Ovary (tissue), 10 donors: ENCODE measurements at regions of chr19 and their contacts with region 1.

Region 1: DNA sequence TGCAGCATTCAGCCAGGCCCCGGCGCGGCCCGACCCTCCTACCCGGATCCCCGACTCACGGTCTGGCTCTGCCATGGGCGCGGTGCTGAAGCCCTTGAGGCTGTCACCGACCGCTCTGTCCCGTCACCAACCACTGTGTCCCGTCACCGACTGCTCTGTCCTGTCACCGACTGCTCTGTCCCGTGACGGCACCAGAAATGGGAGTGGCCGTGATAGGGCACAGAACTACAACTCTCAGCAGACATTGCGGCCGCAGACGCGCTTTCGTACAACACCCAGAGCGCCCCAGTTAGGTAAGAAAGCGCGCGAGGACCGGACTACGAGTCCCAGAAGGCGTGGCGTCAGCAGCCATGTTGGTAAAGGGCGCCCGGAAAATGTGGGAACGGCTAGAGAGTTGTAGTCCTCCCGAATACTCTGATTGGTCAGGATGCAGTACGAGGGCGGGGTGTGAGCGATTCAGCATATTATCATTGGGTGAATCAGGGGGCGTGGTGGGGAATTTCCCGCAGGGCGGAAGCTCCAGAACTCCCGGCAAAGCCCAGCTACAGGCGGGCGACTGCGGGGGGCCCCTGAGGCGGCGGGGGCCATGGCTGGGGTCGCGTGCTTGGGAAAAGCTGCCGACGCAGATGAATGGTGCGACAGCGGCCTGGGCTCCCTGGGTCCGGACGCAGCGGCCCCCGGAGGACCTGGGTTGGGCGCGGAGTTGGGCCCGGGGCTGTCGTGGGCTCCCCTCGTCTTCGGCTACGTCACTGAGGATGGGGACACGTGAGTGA is at the starts of genes NFKBIB and SIRT2:
- DNase-seq: peak; percentile 98 to 100 (median 99)
- H3K4me3 ChIP-seq: peak within 1 kb of the TSS; percentile 96
- H3K27ac ChIP-seq: peak within 1 kb of the TSS; percentile 72 to 86
- H3K4me1 ChIP-seq: peaks cover 2% of the 10 kb centered on the region
- H3K27me3 ChIP-seq: no peaks in the 10 kb centered on the region
- CTCF ChIP-seq: peak in 1 of 3 donors; percentile 7
- EP300 ChIP-seq: peak; percentile 59
- POLR2A ChIP-seq: peak; percentile 53
- total RNA-seq, gene NFKBIB: 8.5 to 19.3 (median 13.2) TPM
- total RNA-seq, gene SIRT2: 51.7 to 64.9 (median 55.7) TPM

Region 2: GRCh38 chr19:38849860-38850435 is 49.7 kb before region 1 on chr19 and contains the start of gene HNRNPL:
- intact Hi-C with region 1: loop called in 1 of 4 experiments (anchors 1 kb)
- DNase-seq: peak in 4 of 5 donors; percentile 99 to 100 (median 99)
- H3K4me3 ChIP-seq: peak within 1 kb of the TSS; percentile 99
- H3K27ac ChIP-seq: peak within 1 kb of the TSS; percentile 100
- H3K4me1 ChIP-seq: peaks cover 13% of the 10 kb centered on the region
- H3K27me3 ChIP-seq: no peaks in the 10 kb centered on the region
- CTCF ChIP-seq: peak; percentile 36 to 76 (median 67)
- EP300 ChIP-seq: peak; percentile 35
- POLR2A ChIP-seq: peak; percentile 99
- total RNA-seq, gene HNRNPL: 110 to 282 (median 230) TPM

Region 3: DNA sequence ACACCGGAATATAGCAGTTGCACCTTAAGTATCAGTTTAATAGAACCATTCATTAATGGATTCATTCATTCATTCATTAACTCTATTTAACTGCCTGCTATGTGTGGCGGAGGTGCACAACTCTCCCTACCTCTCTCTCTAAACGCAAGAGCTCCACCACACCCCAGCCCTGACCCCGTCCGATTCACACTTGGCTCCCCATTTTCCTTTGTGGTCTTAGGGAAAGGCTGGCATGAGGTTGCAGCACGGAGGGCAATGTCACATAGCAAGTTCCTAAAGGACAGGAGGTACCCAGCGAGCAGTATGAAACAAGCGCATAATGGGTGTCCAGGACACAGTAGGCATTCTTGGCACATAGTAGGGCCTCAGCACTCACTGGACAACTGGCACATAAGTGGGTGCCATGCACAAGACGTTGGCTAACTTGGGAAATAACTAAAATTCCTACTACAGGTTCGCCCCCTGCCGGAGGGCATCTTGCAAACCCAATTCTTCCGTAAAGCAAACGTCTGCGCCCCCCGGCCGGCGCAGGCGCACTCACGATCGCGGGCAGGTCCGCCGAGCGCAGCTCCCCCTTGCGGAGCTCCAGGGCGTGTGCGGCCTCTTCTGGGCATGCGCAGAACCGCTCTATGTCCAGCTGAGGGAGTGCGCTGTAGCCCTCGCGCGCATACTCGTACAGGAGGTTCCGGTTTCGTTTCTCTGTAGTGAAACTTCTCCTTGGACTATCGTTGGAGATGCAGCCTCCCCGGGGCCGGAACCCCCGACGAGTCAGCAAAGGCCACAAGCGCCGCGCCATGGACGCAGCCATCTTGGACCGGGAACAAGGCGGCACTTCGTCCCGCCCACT is 30.5 kb after region 1 on chr19 and contains the start of gene SARS2:
- intact Hi-C with region 1: loop called in 1 of 4 experiments (anchors 1 kb)
- DNase-seq: peak; percentile 91 to 96 (median 93)
- H3K4me3 ChIP-seq: peak within 1 kb of the TSS; percentile 91
- H3K27ac ChIP-seq: peak within 1 kb of the TSS; percentile 90 to 92
- H3K4me1 ChIP-seq: peaks cover 12% of the 10 kb centered on the region
- H3K27me3 ChIP-seq: no peaks in the 10 kb centered on the region
- CTCF ChIP-seq: peak; percentile 98 to 99 (median 99)
- EP300 ChIP-seq: no peak
- POLR2A ChIP-seq: no peak
- total RNA-seq, gene SARS2: 9.8 to 20.6 (median 18.0) TPM

Region 4: GRCh38 chr19:38944981-38945506 is 45.4 kb after region 1 on chr19:
- intact Hi-C with region 1: no loop called
- DNase-seq: peak in 1 of 5 donors; percentile 40
- H3K4me3 ChIP-seq: no peak overlapping the region
- H3K27ac ChIP-seq: no peak overlapping the region
- H3K4me1 ChIP-seq: peaks cover 3% of the 10 kb centered on the region
- H3K27me3 ChIP-seq: no peaks in the 10 kb centered on the region
- CTCF ChIP-seq: no peak
- EP300 ChIP-seq: no peak
- POLR2A ChIP-seq: no peak